GM12878 (cell line): ENCODE measurements at regions of chr2 and their contacts with region 1.

Region 1: DNA sequence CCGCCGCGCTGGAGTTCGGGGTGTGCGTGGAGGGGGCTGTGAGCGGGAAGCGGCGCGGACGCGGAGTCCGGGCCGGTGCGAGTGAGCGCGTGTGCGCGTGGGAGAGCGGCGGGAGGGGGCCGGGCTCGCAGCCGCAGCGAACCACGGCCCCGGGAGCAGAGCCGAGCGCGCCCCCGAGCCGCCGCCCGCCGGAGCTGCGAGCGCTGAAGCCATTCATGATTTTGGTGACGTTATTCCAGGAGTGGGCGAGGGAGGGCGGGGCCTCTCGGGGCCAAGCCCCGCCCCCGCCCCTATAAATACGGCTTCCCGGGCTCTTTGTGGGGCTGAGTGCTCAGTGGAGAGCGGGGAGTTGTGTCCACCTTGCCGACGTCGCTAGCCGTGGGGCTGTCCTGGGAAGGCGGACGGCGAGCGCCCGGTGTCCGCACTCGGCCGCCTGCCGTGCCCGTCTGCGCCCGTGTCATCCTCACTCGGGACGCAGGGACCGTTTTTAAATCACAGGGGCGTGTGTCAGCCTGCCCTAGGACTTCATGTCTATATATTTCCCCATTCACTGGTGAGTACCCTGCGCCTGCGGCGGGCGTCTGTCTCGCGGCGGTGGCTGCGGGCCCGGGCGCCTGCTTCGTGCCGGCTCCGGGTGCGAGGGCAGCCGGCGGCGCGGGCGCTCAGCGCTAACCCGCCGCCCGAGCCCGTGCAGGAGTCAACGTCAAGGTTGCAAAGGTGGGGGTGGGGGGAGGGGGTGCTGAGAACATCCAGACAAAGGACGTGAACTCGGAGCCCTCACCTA is at the start of gene LBH:
- DNase-seq: peak; percentile 56
- ATAC-seq: peak; percentile 59
- H3K4me3 ChIP-seq: peak within 1 kb of the TSS; percentile 80
- H3K27ac ChIP-seq: peak within 1 kb of the TSS; percentile 58
- H3K4me1 ChIP-seq: peaks cover 47% of the 10 kb centered on the region
- H3K27me3 ChIP-seq: no peaks in the 10 kb centered on the region
- CTCF ChIP-seq: peak in 1 of 3 experiments; percentile 31; a peak in 1 of 6 replicates
- EP300 ChIP-seq: peak in 1 of 2 experiments; percentile 27; a peak in 1 of 4 replicates
- POLR2A ChIP-seq: peak; percentile 99
- RAD21 ChIP-seq: peak; percentile 24; the same call in 1 of the 2 replicates
- polyA plus RNA-seq, gene LBH: 9.3 to 26.5 TPM

Region 2: GRCh38 chr2:30217644-30218337 is 13.6 kb before region 1 on chr2:
- CTCF ChIA-PET with region 1: interaction called, 207 read pairs
- POLR2A ChIA-PET with region 1: interaction called, 25 read pairs
- RAD21 ChIA-PET with region 1: interaction called, 322 read pairs
- SMC1A ChIA-PET with region 1: interaction called, 444 read pairs
- in situ Hi-C with region 1: no loop called
- intact Hi-C with region 1: no loop called
- DNase-seq: peak; percentile 48
- ATAC-seq: peak; percentile 87
- H3K4me3 ChIP-seq: no peak overlapping the region
- H3K27ac ChIP-seq: no peak overlapping the region
- H3K4me1 ChIP-seq: peaks cover 10% of the 10 kb centered on the region
- H3K27me3 ChIP-seq: no peaks in the 10 kb centered on the region
- CTCF ChIP-seq: no peak
- EP300 ChIP-seq: no peak
- POLR2A ChIP-seq: no peak
- RAD21 ChIP-seq: no peak

Region 3: DNA sequence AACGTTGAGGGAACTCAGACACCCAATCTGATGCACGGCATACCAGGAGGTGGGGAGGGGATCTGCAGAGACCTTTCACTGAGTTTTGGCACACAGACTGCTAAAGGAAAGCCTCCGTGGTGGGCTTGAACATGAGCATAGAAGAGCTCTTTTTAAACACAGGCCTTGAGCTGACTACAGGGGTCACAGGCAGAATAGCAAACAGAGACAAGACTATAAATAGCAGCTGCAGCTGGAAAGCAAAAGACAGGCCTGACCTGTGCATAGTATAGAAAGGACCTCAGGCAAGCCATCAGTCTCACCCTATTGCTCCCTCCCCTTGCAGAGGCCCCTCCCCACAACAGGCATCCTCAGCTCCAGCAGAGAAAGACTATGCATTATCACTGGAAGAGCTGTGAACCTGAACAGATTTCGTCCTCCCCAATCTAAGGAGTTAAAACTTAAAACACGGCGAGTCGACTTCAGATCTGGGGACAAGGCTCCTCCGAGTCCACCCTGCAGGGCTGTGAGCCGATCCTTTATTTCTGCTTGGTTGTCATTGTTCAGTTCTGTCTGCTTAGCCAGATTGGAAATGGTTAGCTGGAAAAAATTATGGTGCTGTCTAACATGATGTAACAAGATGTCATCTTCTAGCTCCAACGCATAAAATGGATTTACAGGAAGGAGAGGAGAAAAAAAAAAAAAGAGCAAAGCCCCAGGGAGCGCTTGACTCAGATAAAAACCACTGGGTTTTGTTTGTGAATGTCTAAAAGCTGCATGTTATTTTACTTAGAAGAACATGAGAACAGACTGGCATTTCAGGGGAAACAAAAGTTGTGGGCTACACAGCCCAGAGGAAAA is 190.4 kb after region 1 on chr2:
- CTCF ChIA-PET with region 1: interaction called, 3 read pairs
- POLR2A ChIA-PET with region 1: interaction called, 3 read pairs
- RAD21 ChIA-PET with region 1: interaction called, 17 read pairs
- SMC1A ChIA-PET with region 1: interaction called, 4 read pairs
- in situ Hi-C with region 1: no loop called
- intact Hi-C with region 1: no loop called
- DNase-seq: peak; percentile 28
- ATAC-seq: peak; percentile 77
- H3K4me3 ChIP-seq: 0 out of 2 replicates have a peak overlapping the region, but pooled peaks have one; percentile 17
- H3K27ac ChIP-seq: peak overlapping the region; percentile 6; the same call in 1 of the 2 replicates
- H3K4me1 ChIP-seq: peaks cover 25% of the 10 kb centered on the region
- H3K27me3 ChIP-seq: no peaks in the 10 kb centered on the region
- CTCF ChIP-seq: no peak
- EP300 ChIP-seq: no peak
- POLR2A ChIP-seq: no peak
- RAD21 ChIP-seq: no peak

Region 4: GRCh38 chr2:30475542-30475941 is 244.1 kb after region 1 on chr2:
- CTCF ChIA-PET with region 1: interaction called, 18 read pairs
- POLR2A ChIA-PET with region 1: interaction called, 4 read pairs
- RAD21 ChIA-PET with region 1: interaction called, 12 read pairs
- SMC1A ChIA-PET with region 1: interaction called, 26 read pairs
- in situ Hi-C with region 1: no loop called
- intact Hi-C with region 1: loop called (anchors 10 kb)
- DNase-seq: no peak
- ATAC-seq: no peak
- H3K4me3 ChIP-seq: no peak overlapping the region
- H3K27ac ChIP-seq: no peak overlapping the region
- H3K4me1 ChIP-seq: peaks cover 3% of the 10 kb centered on the region; the same call in 1 of the 2 replicates
- H3K27me3 ChIP-seq: no peaks in the 10 kb centered on the region
- CTCF ChIP-seq: no peak; a peak in 1 of 6 replicates
- EP300 ChIP-seq: no peak
- POLR2A ChIP-seq: no peak
- RAD21 ChIP-seq: peak; percentile 35

Region 5: DNA sequence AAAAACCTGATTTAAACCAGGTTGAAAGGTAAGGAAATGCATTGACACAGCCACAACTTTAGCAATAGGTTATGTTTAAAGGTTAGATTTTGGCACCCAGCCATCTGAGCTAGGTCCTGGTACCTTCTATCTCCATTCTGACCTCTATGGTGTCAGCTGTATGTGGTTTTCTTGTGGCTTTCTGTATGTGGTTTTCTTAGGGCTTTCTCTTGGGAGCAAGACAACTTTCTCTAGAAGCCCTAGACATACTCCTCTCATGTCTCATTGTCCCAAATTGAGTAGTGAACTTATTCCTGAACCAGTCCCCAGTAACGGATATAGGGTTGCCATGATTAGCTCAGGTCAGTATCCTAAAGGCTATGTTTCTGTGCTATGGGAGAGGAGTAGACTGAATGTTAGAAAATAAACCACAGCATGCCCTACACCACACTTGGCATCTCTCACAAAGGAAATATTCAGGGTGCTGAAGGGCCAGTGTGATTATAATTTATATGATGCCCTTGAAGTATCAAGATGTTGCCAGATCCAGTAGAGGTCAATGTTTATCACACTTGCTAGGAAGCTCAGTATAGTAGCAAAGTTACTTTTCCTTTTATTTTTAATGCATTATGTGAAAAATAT is 399.8 kb after region 1 on chr2:
- CTCF ChIA-PET with region 1: interaction called, 5 read pairs
- POLR2A ChIA-PET with region 1: no interaction called
- RAD21 ChIA-PET with region 1: interaction called, 4 read pairs
- SMC1A ChIA-PET with region 1: interaction called, 3 read pairs
- in situ Hi-C with region 1: no loop called
- intact Hi-C with region 1: loop called (anchors 5 kb)
- DNase-seq: peak; percentile 48
- ATAC-seq: peak; percentile 56
- H3K4me3 ChIP-seq: no peak overlapping the region
- H3K27ac ChIP-seq: no peak overlapping the region
- H3K4me1 ChIP-seq: peaks cover 25% of the 10 kb centered on the region
- H3K27me3 ChIP-seq: no peaks in the 10 kb centered on the region
- CTCF ChIP-seq: no peak
- EP300 ChIP-seq: no peak
- POLR2A ChIP-seq: no peak
- RAD21 ChIP-seq: no peak